Activated T-helper 2 cell treated with anti-CD3 and anti-CD28 coated beads, Interferon-gamma antibody, Interleukin-2, Interleukin-4, amounts not matched to agents 10 μg/mL and 5 μg/mL and 100 μg/mL, durations not matched to agents 14 hours and 24 hours and 36 hours (primary cell): ENCODE measurements at regions of chr19 and their contacts with region 1.

Region 1: DNA sequence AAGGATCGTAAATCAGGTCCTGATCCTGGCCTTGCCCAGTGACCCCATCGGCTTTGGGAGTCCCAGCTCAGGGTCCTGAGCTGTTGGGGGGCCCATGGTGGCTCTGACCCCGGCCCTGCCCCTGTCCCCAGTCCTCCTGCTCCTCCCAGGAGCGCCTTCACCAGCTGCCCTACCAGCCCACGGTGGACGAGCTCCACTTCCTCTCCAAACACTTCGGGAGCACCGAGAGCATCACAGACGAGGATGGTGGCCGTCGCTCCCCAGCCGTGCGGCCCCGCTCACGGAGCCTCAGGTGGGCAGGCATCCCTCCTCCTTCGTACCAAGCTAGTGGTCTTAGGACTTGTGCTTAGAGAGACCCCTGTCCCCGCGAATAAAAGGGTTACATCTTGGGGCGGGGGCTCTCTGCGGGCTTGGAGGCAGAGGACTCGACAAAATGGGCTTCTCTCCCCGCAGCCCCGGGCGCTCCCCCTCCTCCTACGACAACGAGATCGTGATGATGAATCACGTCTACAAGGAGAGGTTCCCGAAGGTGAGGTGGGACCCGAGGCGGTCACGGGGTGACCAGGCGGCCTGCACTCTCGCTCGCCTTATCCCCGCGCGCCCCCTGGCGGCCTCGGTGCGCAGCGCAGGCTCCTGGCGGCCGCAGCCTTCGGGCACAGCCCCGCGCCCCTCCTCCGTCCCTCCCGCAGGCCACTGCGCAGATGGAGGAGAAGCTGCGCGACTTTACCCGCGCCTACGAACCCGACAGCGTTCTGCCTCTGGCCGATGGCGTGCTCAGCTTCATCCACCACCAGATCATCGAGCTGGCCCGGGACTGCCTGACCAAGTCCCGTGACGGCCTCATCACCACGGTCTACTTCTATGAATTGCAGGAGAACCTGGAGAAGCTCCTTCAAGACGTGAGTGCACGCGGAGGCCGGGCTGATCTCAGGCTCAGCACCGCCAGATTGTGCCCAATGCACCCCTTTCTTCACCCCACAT is 9.1 kb downstream of the MAST1 start:
- DNase-seq: peak; percentile 78
- H3K4me3 Mint-ChIP-seq: peak overlapping the region; percentile 65
- H3K27ac Mint-ChIP-seq: no peak overlapping the region
- H3K4me1 Mint-ChIP-seq: peaks cover 9% of the 10 kb centered on the region
- H3K27me3 Mint-ChIP-seq: peaks cover 10% of the 10 kb centered on the region

Region 2: GRCh38 chr19:12759686-12760085 is 87.8 kb before region 1 on chr19:
- intact Hi-C with region 1: loop called (anchors 1 kb)
- DNase-seq: no peak
- H3K4me3 Mint-ChIP-seq: no peak overlapping the region
- H3K27ac Mint-ChIP-seq: peak overlapping the region; percentile 28
- H3K4me1 Mint-ChIP-seq: peaks cover 4% of the 10 kb centered on the region
- H3K27me3 Mint-ChIP-seq: peaks cover 2% of the 10 kb centered on the region

Region 3: GRCh38 chr19:12766051-12766521 is 81.4 kb before region 1 on chr19:
- intact Hi-C with region 1: loop called (anchors 1 kb)
- DNase-seq: peak; percentile 79
- H3K4me3 Mint-ChIP-seq: peak overlapping the region; percentile 26
- H3K27ac Mint-ChIP-seq: no peak overlapping the region
- H3K4me1 Mint-ChIP-seq: peaks cover 3% of the 10 kb centered on the region
- H3K27me3 Mint-ChIP-seq: no peaks in the 10 kb centered on the region

Region 4: GRCh38 chr19:12907166-12907565 is 59.7 kb after region 1 on chr19:
- intact Hi-C with region 1: no loop called
- DNase-seq: no peak
- H3K4me3 Mint-ChIP-seq: no peak overlapping the region
- H3K27ac Mint-ChIP-seq: no peak overlapping the region
- H3K4me1 Mint-ChIP-seq: peaks cover 2% of the 10 kb centered on the region
- H3K27me3 Mint-ChIP-seq: no peaks in the 10 kb centered on the region